Gastrocnemius medialis (tissue), 4 donors: ENCODE measurements at regions of chr9 and their contacts with region 1.

Region 1: DNA sequence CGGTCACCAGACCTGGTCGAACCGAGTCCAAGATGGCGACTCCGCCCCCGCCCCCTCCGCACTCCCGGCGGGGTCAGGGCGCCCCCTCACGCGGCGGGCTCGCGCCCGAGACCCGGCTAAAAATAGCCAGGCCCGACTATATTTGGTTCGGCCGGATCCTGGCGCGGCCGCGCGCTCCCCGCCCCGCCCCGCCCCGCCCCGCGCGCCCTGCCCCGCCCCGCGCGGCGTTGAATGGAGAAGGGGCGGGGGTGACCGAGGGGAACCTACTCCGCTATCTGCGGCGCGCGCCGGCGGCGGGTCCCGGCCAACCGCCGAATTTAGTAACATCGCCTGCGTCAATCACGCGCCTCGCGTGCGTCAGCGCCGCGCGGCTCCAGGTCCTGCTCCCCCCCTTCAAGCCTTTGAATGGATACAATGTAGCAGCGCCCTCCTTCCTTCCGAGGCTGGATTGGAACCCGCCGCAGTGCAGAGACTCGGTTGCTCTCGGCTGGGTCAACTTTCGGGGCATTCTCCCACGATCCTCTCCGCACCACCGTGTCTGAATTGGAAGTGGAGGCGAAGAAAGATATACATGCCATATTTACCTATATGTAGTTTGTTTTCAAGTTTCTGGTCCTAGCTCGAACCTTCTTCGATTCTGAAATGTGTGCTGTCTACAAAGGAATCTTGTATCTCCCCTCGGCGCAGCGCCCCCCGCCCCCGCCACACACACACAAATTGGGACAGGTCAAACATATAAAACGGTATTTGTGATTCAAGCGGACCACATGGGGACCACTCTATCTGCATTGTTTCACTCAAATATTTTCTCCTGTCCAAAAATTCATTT is 1.6 kb upstream of the NR4A3 start:
- DNase-seq: peak; percentile 90 to 97
- ATAC-seq: peak; percentile 53 to 60
- H3K4me3 ChIP-seq: peak overlapping the region; percentile 81 to 88 (median 84)
- H3K27ac ChIP-seq: peak overlapping the region; percentile 95 to 100 (median 100)
- H3K4me1 ChIP-seq: peaks cover 8 to 29% of the 10 kb centered on the region in 2 donors
- H3K27me3 ChIP-seq: peaks cover 0 to 6% (median 0%) of the 10 kb centered on the region in 3 donors
- CTCF ChIP-seq: peak in 1 of 5 experiments; percentile 23
- POLR2A ChIP-seq: peak; percentile 74 to 80

Region 2: GRCh38 chr9:99104459-99105151 is 715.5 kb before region 1 on chr9 and contains the start of gene TGFBR1:
- in situ Hi-C with region 1: no loop called
- intact Hi-C with region 1: loop called (anchors 10 kb)
- DNase-seq: peak; percentile 87 to 91
- ATAC-seq: peak; percentile 86 to 89
- H3K4me3 ChIP-seq: peak within 1 kb of the TSS; percentile 73 to 97 (median 86)
- H3K27ac ChIP-seq: peak within 1 kb of the TSS; percentile 80 to 91 (median 88)
- H3K4me1 ChIP-seq: peaks cover 39 to 50% of the 10 kb centered on the region in 2 donors
- H3K27me3 ChIP-seq: no peaks in the 10 kb centered on the region
- CTCF ChIP-seq: no peak
- POLR2A ChIP-seq: peak; percentile 94 to 98
- total RNA-seq, gene TGFBR1: 13.5 to 19.0 (median 14.3) TPM

Region 3: GRCh38 chr9:99259231-99259918 is 560.7 kb before region 1 on chr9:
- in situ Hi-C with region 1: loop called in 1 of 4 experiments (anchors 10 kb)
- intact Hi-C with region 1: loop called (anchors 1 kb)
- DNase-seq: peak; percentile 97 to 99
- ATAC-seq: peak; percentile 59 to 63
- H3K4me3 ChIP-seq: peak overlapping the region; percentile 34 to 49 (median 44)
- H3K27ac ChIP-seq: peak overlapping the region; percentile 93 to 100 (median 98)
- H3K4me1 ChIP-seq: peaks cover 29 to 48% of the 10 kb centered on the region in 2 donors
- H3K27me3 ChIP-seq: no peaks in the 10 kb centered on the region
- CTCF ChIP-seq: peak in 1 of 5 experiments; percentile 38
- POLR2A ChIP-seq: peak; percentile 91 to 94

Region 4: DNA sequence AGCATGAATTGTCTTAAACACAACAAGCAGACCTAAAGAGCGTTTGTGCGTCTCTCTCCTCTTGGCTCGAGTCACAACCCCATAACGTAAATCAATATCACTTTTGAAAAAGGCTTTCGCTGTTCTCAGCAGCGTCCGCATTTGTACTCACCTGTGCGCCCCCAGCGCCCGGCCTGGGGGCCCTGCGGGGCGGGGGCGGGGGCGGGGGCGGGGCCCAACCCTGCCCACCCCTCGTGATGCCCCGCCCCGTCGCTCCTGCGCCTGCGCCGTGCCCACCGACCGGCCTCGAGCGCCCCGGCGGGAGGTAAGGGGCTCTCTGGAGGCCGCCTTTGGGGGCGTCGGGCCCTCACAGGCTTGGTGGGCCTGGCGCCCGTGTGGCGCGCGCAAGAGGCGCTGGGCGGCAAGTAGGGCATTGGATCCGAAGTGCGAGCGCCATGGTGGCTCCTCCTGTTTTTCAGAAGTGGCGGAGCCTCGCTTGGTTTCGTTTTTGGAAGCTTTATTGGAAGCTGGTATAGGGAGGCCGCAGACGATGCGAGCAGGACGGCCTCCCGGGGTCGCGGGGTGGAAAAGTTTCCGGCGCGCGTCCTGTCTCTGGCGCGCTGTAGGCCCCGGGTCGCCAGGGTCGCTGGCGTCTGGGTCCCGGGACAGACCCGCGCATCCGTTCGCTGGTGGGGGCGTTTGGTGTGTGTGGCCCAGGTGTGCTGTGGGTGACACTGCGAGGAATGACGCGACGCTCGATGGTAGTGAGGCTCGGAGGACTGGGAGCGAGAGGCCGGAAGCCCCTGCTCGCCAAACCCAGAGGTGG is 86.5 kb after region 1 on chr9 and contains the start of gene STX17:
- in situ Hi-C with region 1: no loop called
- intact Hi-C with region 1: loop called (anchors 1 kb)
- DNase-seq: peak; percentile 53 to 70
- ATAC-seq: peak; percentile 89 to 93
- H3K4me3 ChIP-seq: peak within 1 kb of the TSS; percentile 95 to 99 (median 96)
- H3K27ac ChIP-seq: peak within 1 kb of the TSS; percentile 98 to 100 (median 98)
- H3K4me1 ChIP-seq: peaks cover 13 to 21% of the 10 kb centered on the region in 2 donors
- H3K27me3 ChIP-seq: no peaks in the 10 kb centered on the region
- CTCF ChIP-seq: no peak
- POLR2A ChIP-seq: peak; percentile 85 to 90
- total RNA-seq, gene STX17: 25.3 to 34.4 (median 31.6) TPM

Region 5: GRCh38 chr9:100352727-100353505 is 532.8 kb after region 1 on chr9 and contains the start of gene TEX10:
- in situ Hi-C with region 1: no loop called
- intact Hi-C with region 1: loop called (anchors 10 kb)
- DNase-seq: peak; percentile 77 to 83
- ATAC-seq: peak; percentile 93 to 97
- H3K4me3 ChIP-seq: peak within 1 kb of the TSS; percentile 80 to 95 (median 84)
- H3K27ac ChIP-seq: peak within 1 kb of the TSS; percentile 77 to 90 (median 86)
- H3K4me1 ChIP-seq: peaks cover 13 to 17% of the 10 kb centered on the region in 2 donors
- H3K27me3 ChIP-seq: no peaks in the 10 kb centered on the region
- CTCF ChIP-seq: peak in 2 of 5 experiments; percentile 9 to 20
- POLR2A ChIP-seq: peak; percentile 66 to 71
- total RNA-seq, gene TEX10: 16.0 to 20.5 (median 18.4) TPM

Region 6: DNA sequence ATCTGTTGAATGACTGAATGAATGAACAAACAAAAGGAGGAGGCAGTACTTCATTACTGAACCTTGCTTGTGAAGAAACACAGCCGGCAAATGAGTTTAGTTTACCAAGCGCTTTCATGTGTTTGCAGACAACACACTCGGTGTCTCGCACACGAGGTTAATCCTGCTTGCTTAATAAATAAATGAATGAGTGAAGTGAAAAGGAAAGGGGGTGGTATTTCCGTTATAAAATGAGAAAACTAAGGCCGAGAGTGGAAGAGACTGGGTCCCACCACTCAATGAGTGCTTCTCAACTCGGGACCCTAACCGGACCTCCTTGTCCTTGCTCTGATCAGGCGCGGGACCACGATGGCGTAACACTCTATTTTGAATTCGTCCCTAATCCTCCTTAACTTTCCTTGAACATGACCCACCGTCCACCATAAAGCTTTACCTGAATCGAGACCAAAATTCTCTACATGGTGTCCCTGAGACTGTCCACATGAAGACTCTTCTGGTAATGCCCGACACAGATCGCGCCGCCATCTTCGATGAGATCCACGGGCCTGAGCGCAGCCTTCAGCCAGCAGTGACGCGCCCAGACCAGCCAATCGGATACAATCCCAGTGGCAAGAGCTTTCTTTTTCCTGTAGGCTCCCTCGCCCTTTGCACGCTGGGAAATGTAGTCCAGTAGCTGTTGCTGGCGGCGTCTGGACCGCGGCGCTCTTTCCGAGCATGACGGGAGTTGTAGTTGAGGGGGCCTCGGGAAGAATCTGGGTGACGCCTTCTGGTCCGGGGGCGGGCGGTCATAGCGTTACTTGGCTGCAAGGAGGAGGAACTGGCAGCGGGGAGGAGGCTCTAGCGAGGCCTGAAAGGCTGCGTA is 1578.2 kb after region 1 on chr9 and contains the starts of genes MRPL50 and ZNF189:
- in situ Hi-C with region 1: no loop called
- intact Hi-C with region 1: loop called (anchors 5 kb)
- DNase-seq: peak; percentile 99
- ATAC-seq: peak; percentile 97 to 98
- H3K4me3 ChIP-seq: peak within 1 kb of the TSS; percentile 71 to 85 (median 78)
- H3K27ac ChIP-seq: peak within 1 kb of the TSS; percentile 86 to 97 (median 90)
- H3K4me1 ChIP-seq: peaks cover 37 to 49% of the 10 kb centered on the region in 2 donors
- H3K27me3 ChIP-seq: no peaks in the 10 kb centered on the region
- CTCF ChIP-seq: no peak
- POLR2A ChIP-seq: peak; percentile 66 to 79
- total RNA-seq, gene MRPL50: 6.3 to 13.7 (median 10.2) TPM
- total RNA-seq, gene ZNF189: 9.7 to 42.8 (median 12.2) TPM